Activated CD8-positive, alpha-beta memory T cell treated with anti-CD3 and anti-CD28 coated beads, Interleukin-2, amount 10 ng/mL, durations not matched to agents 7 days and 5 days (primary cell): ENCODE measurements at regions of chr2 and their contacts with region 1.

Region 1: DNA sequence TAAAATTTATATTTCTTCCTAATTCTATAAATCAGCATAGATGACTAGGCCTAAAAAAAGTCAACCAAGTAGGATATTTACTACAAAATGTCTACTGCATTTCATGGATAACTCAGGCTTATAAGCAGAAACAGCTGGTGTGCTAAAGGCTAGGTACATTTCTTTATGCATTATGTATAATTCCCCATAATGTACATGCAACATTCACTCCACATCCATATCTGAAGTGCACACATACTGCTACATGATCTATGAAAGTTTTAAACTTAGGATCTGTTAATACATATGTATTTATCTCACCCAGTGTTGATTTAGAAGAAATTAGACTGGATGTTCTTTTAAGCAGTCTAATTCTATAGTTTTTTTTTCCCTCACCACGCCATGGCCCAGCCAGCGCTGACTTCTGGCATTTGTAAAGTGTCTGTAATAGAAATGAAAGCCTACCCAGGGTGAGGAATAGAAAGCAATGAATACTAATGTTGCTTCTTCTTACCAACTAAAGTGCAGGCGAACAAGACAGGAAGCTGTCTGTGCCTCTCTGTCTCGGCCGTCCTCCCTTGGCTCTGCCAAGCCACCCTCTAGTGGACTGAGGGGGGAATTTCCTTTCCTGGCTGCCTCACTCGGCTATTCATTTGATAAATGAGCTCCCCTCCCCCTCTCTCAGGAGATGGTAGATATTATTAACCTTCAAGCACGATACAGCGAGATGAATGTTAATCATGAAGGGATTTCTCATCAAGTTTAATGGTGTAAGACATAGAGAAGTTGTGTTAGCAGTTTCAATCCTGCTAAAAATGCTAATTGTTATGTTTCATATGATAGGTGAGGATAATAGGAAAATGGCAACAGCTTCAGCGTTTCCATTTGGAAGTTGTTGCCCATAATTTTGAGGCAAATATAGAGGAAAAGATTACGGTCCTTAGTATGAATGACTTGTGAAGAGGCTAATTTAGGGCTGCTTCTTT is 384.5 kb downstream of the MTX2 start:
- DNase-seq: peak; percentile 63
- ATAC-seq: peak; percentile 48
- H3K4me3 Mint-ChIP-seq: no peak overlapping the region
- H3K27ac Mint-ChIP-seq: no peak overlapping the region
- H3K4me1 Mint-ChIP-seq: peaks cover 26% of the 10 kb centered on the region
- H3K27me3 Mint-ChIP-seq: peaks cover 74% of the 10 kb centered on the region

Region 2: GRCh38 chr2:176140513-176141317 is 513.0 kb before region 1 on chr2:
- CTCF ChIA-PET with region 1: interaction called, 34 read pairs
- DNase-seq: peak; percentile 80
- ATAC-seq: peak; percentile 94
- H3K4me3 Mint-ChIP-seq: peak overlapping the region; percentile 26
- H3K27ac Mint-ChIP-seq: no peak overlapping the region
- H3K4me1 Mint-ChIP-seq: peaks cover 13% of the 10 kb centered on the region
- H3K27me3 Mint-ChIP-seq: peaks cover 86% of the 10 kb centered on the region

Region 3: DNA sequence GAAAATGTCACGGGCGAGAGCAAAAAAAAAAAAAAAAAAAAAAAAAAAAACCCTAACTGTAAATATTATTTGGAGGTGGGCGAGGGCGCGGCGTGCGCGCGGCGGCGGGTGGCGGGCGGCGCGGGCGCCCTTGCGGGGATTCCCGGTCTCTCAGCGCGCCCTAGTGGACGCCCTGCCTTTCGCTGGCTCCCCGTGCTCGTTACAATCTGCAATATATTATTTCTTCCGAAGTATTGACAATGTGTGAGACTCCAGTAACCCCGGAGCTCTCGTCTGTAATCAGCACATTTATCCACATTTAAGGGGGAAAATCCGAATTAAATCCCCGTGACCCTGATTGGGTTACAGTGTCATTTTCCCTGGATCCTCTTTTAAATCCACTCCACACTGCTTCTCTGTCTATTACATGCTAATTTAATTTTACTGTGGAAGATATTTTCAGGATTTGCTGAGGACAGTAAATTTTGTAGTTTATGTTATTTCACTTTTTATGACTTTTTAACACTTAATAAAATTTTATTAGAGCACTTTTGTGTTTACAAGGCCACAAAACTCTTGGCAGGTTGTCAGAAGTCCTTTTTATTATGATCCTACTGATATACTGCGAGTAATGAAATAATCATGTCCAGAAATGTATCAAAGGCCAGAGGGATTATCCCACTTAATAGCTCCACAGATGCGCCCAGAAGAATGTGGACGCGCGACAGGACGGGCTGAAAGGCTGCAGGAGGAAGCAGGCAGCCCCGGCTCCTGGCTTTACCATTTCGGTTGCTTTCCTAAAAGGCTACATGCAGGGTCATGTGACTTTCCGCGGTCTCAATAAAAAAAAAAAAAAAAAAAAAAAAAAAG is 15.4 kb before region 1 on chr2:
- CTCF ChIA-PET with region 1: interaction called, 38 read pairs
- DNase-seq: peak; percentile 70
- ATAC-seq: peak; percentile 92
- H3K4me3 Mint-ChIP-seq: peak overlapping the region; percentile 60
- H3K27ac Mint-ChIP-seq: no peak overlapping the region
- H3K4me1 Mint-ChIP-seq: peaks cover 11% of the 10 kb centered on the region
- H3K27me3 Mint-ChIP-seq: peaks cover 70% of the 10 kb centered on the region

Region 4: DNA sequence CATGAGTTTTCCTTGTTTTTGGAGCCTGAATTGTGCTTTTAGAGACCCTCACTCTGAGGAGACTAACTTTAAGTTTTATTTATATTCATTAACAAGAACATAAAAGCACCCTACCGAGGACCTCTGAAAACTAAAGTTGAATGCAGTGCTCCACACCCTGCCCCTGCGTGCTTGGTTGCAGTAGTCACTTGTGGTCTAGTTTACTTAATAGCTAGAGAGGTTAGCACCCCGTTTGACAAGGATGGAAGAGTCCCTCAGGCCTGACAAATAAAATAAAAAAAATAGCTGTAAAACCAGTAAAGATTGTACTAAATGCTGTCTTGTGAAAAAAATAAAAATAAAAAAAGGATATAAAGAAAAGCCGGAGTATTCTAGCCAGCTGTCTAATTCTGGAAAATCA is 10.7 kb after region 1 on chr2:
- CTCF ChIA-PET with region 1: interaction called, 14 read pairs
- DNase-seq: no peak
- ATAC-seq: no peak
- H3K4me3 Mint-ChIP-seq: no peak overlapping the region
- H3K27ac Mint-ChIP-seq: no peak overlapping the region
- H3K4me1 Mint-ChIP-seq: peaks cover 1% of the 10 kb centered on the region
- H3K27me3 Mint-ChIP-seq: peaks cover 52% of the 10 kb centered on the region

Region 5: DNA sequence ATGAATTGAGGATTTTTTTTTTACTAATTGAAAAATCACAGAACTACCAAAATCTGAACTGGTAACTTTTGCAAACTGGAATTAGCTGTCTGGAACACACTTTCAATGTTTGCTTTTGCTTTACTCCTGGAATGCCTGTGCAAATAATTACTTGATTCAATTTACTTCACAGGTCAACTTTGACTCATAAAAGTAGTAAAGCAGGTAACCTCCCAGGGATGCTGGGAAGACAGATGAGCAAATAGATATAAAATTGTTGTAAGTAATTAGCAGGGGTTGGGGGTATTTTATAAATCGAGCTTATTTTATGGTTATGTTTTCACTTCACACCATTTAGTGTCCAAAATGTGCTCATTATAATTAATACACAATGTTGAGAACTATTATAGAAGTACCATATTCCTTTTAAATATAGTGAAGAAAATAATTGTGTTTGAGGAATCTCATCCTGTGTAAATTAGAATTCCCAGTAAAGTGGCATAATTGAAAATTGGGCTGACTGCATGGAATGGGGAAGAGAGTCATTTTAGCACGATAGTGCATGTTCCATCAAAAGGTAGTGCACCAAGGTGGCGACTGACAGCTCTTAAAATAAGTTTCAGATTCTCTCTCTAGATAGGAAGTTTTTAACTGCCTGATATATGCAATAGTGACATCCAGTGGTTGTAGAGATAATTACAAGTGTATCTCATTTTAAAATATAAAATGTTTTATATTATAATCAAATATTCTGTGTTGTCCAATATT is 160.7 kb after region 1 on chr2:
- CTCF ChIA-PET with region 1: interaction called, 31 read pairs
- DNase-seq: no peak
- ATAC-seq: peak; percentile 65
- H3K4me3 Mint-ChIP-seq: peak overlapping the region; percentile 21
- H3K27ac Mint-ChIP-seq: no peak overlapping the region
- H3K4me1 Mint-ChIP-seq: peaks cover 35% of the 10 kb centered on the region
- H3K27me3 Mint-ChIP-seq: no peaks in the 10 kb centered on the region

Region 6: DNA sequence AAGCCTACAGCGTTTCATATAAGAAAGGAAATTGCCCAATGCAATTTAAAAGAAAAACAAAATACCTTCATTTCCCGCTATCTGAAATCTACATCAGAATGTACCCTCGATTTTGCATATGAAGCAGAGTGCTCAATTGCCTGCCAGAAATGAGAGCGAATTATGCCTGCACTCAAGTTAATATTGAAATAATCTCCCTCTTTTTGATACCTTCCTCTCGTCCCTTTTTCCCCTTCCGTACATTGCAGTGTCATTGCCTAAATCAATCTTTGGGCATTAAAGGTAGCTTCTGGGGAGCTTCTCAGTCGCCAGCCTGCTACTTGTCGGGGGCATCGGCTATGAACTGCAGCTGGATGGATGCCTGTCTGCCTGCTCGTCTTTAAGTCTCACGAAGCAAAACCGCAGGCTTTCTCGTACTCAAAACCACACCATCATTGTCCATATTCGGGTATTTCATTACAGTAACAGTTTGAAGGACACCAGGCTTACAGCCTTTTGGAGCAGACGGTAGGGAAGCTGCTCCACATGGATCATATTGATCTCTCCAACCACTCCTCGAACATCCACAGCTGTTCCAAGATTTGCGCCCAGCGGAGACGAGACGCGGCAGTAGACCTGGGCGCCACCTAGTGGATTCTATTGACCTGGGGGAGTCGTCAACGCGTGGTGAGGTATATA is 494.9 kb after region 1 on chr2:
- CTCF ChIA-PET with region 1: interaction called, 50 read pairs
- DNase-seq: peak; percentile 86
- ATAC-seq: peak; percentile 97
- H3K4me3 Mint-ChIP-seq: peak overlapping the region; percentile 88
- H3K27ac Mint-ChIP-seq: peak overlapping the region; percentile 67
- H3K4me1 Mint-ChIP-seq: peaks cover 25% of the 10 kb centered on the region
- H3K27me3 Mint-ChIP-seq: peaks cover 61% of the 10 kb centered on the region